Heart left ventricle (tissue), 16 donors: ENCODE measurements at regions of chr17 and their contacts with region 1.

Region 1: DNA sequence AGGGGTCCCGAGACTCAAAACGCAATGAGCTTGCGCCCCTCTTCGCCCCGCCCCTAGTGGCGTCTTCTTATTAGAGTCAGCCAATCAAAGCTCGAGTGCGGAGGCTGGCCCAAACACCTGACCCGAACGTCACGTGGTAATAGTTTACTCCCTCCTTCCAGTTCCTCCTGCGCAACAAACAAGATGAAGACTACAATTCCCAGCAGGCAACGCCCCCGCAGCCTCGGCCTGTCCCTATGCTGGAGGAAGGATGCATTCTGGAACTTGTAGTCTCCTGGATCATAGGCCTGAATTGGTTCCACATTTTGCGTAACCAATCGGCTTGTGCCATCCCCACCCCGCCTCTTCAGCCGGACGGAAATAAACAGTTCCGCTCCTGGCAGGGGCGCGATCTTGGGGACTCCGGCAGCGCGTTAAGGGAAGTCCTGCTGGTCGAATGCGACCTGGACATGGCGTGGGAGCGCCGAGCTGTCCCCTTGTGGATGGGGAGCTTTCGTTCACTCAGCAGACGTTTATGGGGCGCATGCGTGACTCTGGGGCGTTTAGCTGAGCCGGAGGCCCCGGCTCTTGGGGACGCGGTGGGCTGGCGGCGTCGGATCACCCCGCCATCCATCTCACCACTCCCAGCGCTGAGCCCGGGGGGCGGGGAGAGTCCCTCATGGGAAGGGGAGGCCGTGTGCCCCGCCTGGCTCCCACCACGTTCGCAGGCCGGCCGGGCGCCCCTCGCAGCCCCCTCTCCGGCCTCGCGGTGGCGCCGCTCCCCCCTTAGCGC is at the start of gene WBP2:
- DNase-seq: peak; percentile 97 to 99 (median 99)
- ATAC-seq: peak; percentile 90 to 96 (median 93)
- H3K4me3 ChIP-seq: peak within 1 kb of the TSS; percentile 57 to 97 (median 82)
- H3K27ac ChIP-seq: peak within 1 kb of the TSS; percentile 94 to 100 (median 98)
- H3K4me1 ChIP-seq: peaks cover 0 to 74% (median 45%) of the 10 kb centered on the region in 12 donors
- H3K27me3 ChIP-seq: no peaks in the 10 kb centered on the region
- CTCF ChIP-seq: peak in 11 of 12 donors; percentile 28 to 77 (median 54)
- POLR2A ChIP-seq: peak; percentile 83 to 98
- total RNA-seq, gene WBP2: 134 to 311 (median 158) TPM

Region 2: DNA sequence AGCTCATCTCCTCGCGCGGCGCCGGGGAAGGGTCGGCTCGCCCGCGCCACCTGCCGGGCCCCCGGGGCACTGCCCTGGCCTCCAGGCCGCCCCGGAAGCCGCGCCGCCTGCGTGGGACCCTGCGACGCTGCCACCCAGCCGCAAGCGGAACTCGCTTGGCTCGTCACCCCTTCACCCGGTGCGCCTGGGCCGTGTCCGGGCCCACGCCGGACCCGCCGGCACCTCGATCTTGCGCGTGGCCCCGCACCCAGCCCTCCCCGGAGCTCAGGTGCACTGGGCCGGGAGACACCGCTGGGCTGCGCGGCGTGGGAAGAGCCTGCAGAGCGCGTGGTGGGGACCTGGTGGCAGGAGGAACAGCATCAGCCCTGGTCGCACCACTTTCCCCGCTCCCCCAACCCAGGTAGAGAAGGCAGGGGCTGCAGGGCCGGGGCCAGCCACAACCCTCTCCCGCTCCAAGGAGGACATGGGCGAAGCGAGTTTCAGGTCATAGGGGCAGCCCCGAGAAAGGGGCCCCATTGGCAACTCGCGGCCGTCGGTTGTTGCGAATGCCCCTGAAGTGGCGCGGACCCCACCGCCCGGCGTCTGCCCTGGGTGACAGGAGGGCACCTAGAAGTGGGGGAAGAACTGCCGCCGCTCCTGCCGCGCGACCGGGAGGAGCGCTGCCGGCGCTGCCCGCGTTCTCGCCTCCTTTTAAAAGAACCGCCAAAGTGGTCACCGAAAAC is 584.1 kb before region 1 on chr17:
- intact Hi-C with region 1: no loop called
- DNase-seq: peak; percentile 82 to 92 (median 86)
- ATAC-seq: peak; percentile 32 to 83 (median 72)
- H3K4me3 ChIP-seq: peak overlapping the region; percentile 62 to 99 (median 95)
- H3K27ac ChIP-seq: peak overlapping the region; percentile 84 to 98 (median 92)
- H3K4me1 ChIP-seq: peaks cover 0 to 53% (median 22%) of the 10 kb centered on the region in 12 donors
- H3K27me3 ChIP-seq: no peaks in the 10 kb centered on the region
- CTCF ChIP-seq: peak; percentile 37 to 95 (median 83)
- POLR2A ChIP-seq: peak in 1 of 2 donors; percentile 38

Region 3: DNA sequence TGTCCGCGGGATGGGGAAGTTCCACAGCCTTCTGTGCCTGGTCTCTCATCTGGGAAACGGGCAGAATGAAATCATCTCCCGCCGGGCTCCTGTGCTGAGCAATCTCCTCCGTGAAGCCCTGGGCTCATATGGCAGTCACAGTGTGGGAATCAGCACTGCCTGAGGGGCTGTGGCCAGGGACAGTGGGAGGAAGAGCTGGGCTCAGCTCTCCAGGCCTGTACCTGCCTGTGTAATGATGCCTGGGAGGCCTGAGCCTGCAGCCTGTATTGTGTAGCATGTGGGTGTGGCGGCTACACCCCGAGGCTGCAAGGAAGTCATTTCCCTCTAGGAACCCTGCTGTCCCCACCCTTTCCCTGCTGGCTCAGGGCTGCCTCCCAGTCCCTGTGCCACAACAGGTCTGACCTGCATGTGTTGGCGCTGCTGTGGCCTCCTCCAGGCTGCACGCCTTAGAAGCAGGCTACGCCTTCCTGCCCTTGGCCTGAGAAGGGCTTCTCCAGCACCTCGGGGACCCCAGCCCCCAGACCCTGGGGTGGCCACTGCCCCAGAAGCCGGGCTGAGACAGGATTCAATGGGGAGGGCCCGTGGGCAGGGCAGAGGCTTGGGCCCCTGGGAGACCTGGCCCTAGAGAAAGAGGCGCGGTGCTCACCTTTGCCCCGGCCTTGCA is 132.2 kb before region 1 on chr17:
- intact Hi-C with region 1: no loop called
- DNase-seq: peak in 1 of 5 donors; percentile 73
- ATAC-seq: peak in 3 of 4 donors; percentile 53 to 74 (median 63)
- H3K4me3 ChIP-seq: peak overlapping the region in 4 of 12 donors; percentile 17 to 60 (median 25)
- H3K27ac ChIP-seq: peak overlapping the region in 10 of 12 donors; percentile 11 to 82 (median 44)
- H3K4me1 ChIP-seq: peaks cover 0 to 26% (median 12%) of the 10 kb centered on the region in 12 donors
- H3K27me3 ChIP-seq: peaks cover 0 to 32% (median 14%) of the 10 kb centered on the region in 9 donors
- CTCF ChIP-seq: no peak
- POLR2A ChIP-seq: peak in 1 of 2 donors; percentile 15

Region 4: DNA sequence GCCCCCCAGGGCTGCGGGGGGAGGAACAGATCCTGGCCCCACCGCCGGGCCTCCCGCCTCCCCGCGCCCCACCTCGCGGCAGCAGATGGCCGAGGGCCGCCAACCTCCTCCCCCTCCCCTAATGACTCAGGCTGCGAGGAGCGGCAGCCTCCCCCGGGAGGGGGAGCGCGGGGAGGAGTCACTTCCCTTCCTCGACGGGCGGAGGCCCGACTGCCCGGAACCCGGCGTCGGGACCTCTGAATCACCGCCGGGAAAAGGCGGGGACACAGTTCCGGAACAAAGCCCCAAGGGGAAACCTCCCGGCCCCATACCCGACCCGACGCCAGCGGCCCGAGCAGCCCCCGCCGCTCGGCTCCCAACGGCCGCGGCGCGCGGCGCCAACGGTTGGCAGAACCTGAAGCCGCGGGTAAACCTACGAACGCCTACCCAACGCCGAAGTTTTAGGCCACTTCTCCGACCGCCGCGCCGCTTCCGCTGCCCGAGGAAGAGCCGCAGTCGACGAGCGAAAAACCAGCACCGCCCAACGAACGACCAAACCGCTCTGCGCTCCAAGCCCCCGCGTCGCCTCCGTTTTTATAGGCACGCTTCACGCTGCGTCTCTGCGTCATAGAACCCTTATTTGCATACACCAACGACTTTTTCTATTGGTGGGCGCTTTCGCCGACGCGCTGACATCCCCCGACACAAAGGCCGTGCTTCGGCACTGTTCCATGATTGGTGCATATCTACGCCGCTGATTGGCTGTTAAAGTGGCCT is 76.1 kb before region 1 on chr17:
- intact Hi-C with region 1: loop called in 2 of 10 experiments (anchors 2 to 5 kb)
- DNase-seq: peak; percentile 97 to 99 (median 98)
- ATAC-seq: peak; percentile 79 to 85 (median 82)
- H3K4me3 ChIP-seq: peak overlapping the region; percentile 67 to 97 (median 88)
- H3K27ac ChIP-seq: peak overlapping the region; percentile 81 to 100 (median 98)
- H3K4me1 ChIP-seq: peaks cover 14 to 59% (median 43%) of the 10 kb centered on the region in 12 donors
- H3K27me3 ChIP-seq: no peaks in the 10 kb centered on the region
- CTCF ChIP-seq: peak in 3 of 12 donors; percentile 11 to 26 (median 16)
- POLR2A ChIP-seq: peak; percentile 100

Region 5: DNA sequence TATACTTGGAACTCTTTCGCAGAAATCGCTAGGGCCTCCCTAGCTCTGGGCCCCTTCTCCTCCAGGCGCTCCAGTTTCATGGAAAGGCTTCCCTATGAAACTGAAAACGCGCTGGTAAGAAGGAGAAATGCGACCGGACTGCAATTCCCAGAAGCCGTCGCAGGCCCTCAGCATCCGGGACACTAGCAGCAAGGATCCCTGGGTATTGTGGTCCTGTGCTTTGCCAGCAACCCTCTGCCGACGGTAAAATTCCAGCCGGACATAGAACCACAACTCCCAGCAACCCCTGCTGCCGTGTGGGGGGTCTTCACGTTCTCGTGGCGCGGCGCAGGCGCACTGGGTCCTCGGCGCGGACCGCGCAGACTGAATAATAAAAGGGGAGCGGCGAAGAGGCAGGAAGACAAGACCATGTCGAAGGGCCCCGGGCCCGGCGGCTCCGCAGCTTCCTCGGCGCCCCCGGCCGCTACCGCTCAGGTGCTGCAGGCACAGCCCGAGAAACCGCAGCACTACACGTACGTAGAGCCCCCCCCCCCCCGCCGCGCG is 71.0 kb before region 1 on chr17 and contains the start of gene UNK:
- intact Hi-C with region 1: loop called in 2 of 10 experiments (anchors 2 to 5 kb)
- DNase-seq: peak; percentile 97 to 99 (median 98)
- ATAC-seq: peak; percentile 91 to 94 (median 93)
- H3K4me3 ChIP-seq: peak within 1 kb of the TSS; percentile 45 to 89 (median 75)
- H3K27ac ChIP-seq: peak within 1 kb of the TSS; percentile 94 to 100 (median 99)
- H3K4me1 ChIP-seq: peaks cover 4 to 56% (median 36%) of the 10 kb centered on the region in 12 donors
- H3K27me3 ChIP-seq: no peaks in the 10 kb centered on the region
- CTCF ChIP-seq: no peak
- POLR2A ChIP-seq: peak in 1 of 2 donors; percentile 59
- total RNA-seq, gene UNK: 11.3 to 27.5 (median 16.3) TPM

Region 6: DNA sequence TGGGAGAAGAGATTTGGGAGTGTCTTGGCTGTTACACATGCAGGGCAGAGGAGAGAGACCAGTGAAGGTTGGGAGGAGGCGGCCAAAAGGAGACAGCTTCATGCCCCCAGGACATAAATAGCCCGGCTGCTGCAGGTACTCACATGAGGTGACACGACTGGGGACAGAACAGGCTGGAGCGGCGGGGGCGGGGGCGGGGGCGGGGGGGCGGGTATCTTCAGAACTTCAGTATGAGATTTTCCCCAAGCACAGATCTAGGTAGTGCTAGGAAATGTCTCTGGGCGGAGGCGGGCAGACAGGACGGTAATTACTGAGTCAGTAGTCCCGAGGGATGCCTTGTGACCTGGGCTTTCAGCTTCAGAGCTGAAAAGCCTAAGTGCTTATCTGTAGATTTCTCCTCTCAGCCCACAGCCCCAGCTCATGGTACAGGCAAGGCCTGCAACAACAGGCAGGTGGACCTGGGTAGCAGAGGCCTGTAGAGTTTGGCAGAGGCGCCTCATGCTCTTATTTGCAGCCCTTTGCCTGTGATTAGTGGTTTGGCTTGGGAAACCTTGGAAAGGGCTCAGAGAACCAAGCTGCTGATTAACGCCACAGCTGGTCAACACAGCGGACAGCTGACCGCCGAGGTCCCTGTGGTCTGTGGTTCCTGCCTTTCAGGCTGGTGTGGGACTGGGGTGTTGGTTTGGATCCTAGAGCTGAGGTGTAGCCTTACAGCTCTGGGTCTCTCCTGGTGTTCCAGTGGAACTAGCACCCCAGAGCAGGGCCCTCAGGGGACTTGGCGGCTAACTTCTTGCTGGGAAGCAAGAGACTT is 46.4 kb before region 1 on chr17:
- intact Hi-C with region 1: no loop called
- DNase-seq: peak in 4 of 5 donors; percentile 74 to 85 (median 79)
- ATAC-seq: peak; percentile 60 to 86 (median 77)
- H3K4me3 ChIP-seq: peak overlapping the region in 5 of 12 donors; percentile 3 to 24 (median 6)
- H3K27ac ChIP-seq: peak overlapping the region; percentile 62 to 93 (median 84)
- H3K4me1 ChIP-seq: peaks cover 8 to 45% (median 32%) of the 10 kb centered on the region in 12 donors
- H3K27me3 ChIP-seq: no peaks in the 10 kb centered on the region
- CTCF ChIP-seq: no peak
- POLR2A ChIP-seq: no peak

Region 7: GRCh38 chr17:75832164-75832651 is 23.3 kb before region 1 on chr17:
- intact Hi-C with region 1: no loop called
- DNase-seq: no peak
- ATAC-seq: peak in 3 of 4 donors; percentile 7 to 52 (median 17)
- H3K4me3 ChIP-seq: peak overlapping the region in 1 of 12 donors; percentile 7
- H3K27ac ChIP-seq: peak overlapping the region in 11 of 12 donors; percentile 0 to 90 (median 40)
- H3K4me1 ChIP-seq: peaks cover under 1 to 44% (median 25%) of the 10 kb centered on the region in 12 donors
- H3K27me3 ChIP-seq: no peaks in the 10 kb centered on the region
- CTCF ChIP-seq: no peak
- POLR2A ChIP-seq: peak in 1 of 2 donors; percentile 12

Region 8: DNA sequence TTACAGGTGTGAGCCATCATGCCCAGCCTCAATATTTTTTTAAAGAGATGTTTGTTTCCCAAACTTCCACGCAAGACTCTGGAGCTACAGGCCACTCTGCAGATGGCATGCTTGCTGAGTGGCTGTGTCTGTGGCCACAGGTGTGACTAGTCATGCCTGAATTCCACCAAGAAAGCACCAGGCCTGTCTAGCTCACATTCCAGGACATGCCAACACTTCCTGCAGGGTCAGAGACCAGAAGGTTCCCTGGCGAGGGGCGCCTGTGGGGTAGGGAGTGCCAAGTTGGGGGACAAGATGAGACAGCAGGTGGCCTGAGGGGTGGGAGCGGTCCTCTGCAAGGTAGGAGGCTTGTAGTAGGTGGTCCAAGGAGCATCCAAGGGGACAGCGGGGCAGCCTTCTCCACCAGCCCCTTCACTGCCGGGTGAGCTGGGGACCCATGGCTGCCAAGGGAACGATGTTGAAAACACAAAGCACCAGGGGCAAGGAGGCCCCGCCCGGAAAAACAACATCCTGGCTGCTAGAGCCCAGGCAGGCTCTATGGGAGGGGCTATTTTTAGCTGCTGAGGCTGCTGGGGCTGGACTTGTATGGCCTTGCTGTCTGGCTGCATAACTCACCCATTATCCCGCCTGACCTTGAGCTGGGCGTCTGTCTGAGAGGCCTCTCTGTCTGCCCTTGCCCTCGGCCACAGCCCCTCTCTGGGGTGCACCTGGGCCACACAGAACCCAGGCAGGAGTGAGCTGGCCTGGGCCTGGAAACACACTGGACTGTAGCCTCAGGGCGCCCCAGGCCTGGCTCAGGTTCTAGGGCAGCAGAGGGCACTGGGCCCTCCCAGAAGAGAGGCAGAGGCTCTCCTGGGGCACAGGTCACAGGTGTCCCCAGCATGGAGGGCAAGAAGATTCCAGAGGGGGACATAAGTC is 17.2 kb after region 1 on chr17:
- intact Hi-C with region 1: loop called in 2 of 10 experiments (anchors 1 to 2 kb)
- DNase-seq: peak; percentile 86 to 95 (median 90)
- ATAC-seq: peak; percentile 55 to 77 (median 66)
- H3K4me3 ChIP-seq: no peak overlapping the region
- H3K27ac ChIP-seq: peak overlapping the region; percentile 66 to 99 (median 92)
- H3K4me1 ChIP-seq: peaks cover 17 to 88% (median 59%) of the 10 kb centered on the region in 12 donors
- H3K27me3 ChIP-seq: no peaks in the 10 kb centered on the region
- CTCF ChIP-seq: no peak
- POLR2A ChIP-seq: peak in 1 of 2 donors; percentile 56

Region 9: DNA sequence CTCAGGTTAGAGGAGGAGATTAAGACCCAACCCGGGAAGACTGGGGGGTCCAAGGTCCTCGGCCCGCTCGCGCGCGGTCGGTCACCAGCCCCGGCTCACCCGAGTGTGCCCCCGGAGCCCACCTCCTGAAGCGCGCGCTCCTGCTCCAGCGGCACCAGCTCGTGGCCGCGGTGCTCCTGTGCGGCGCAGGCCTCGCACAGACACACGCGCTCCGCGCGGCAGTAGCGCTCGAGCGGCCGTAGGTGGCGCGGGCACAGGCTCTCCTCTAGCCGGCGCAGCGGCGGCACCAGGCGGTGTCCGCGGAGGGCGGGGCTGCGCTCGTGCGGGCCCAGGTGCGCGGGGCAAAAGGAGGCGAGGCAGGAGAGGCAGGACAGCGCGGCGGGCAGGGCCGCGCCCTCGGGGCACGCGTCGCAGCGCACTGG is 22.3 kb after region 1 on chr17:
- intact Hi-C with region 1: loop called in 4 of 10 experiments (anchors 1 to 2 kb)
- DNase-seq: peak; percentile 67 to 89 (median 76)
- ATAC-seq: peak in 3 of 4 donors; percentile 35 to 67 (median 61)
- H3K4me3 ChIP-seq: peak overlapping the region; percentile 64 to 96 (median 78)
- H3K27ac ChIP-seq: peak overlapping the region; percentile 91 to 99 (median 96)
- H3K4me1 ChIP-seq: peaks cover 14 to 64% (median 42%) of the 10 kb centered on the region in 12 donors
- H3K27me3 ChIP-seq: no peaks in the 10 kb centered on the region
- CTCF ChIP-seq: peak in 9 of 12 donors; percentile 8 to 67 (median 48)
- POLR2A ChIP-seq: no peak

Region 10: GRCh38 chr17:75896415-75897159 is 41.1 kb after region 1 on chr17 and contains the start of gene TRIM65:
- intact Hi-C with region 1: loop called in 6 of 10 experiments (anchors 1 to 5 kb)
- DNase-seq: peak; percentile 88 to 94 (median 90)
- ATAC-seq: peak; percentile 61 to 87 (median 85)
- H3K4me3 ChIP-seq: peak within 1 kb of the TSS; percentile 48 to 97 (median 80)
- H3K27ac ChIP-seq: peak within 1 kb of the TSS; percentile 88 to 99 (median 94)
- H3K4me1 ChIP-seq: peaks cover 0 to 32% (median 24%) of the 10 kb centered on the region in 12 donors
- H3K27me3 ChIP-seq: no peaks in the 10 kb centered on the region
- CTCF ChIP-seq: peak in 11 of 12 donors; percentile 28 to 73 (median 55)
- POLR2A ChIP-seq: peak in 1 of 2 donors; percentile 84
- total RNA-seq, gene TRIM65: 6.8 to 16.1 (median 9.5) TPM

Region 11: GRCh38 chr17:75904749-75905521 is 49.4 kb after region 1 on chr17 and contains the start of gene MRPL38:
- intact Hi-C with region 1: loop called in 1 of 10 experiments (anchors 2 kb)
- DNase-seq: peak; percentile 91 to 96 (median 94)
- ATAC-seq: peak; percentile 91 to 96 (median 94)
- H3K4me3 ChIP-seq: peak within 1 kb of the TSS; percentile 62 to 95 (median 90)
- H3K27ac ChIP-seq: peak within 1 kb of the TSS; percentile 82 to 96 (median 92)
- H3K4me1 ChIP-seq: peaks cover 0 to 32% (median 11%) of the 10 kb centered on the region in 12 donors
- H3K27me3 ChIP-seq: no peaks in the 10 kb centered on the region
- CTCF ChIP-seq: peak in 11 of 12 donors; percentile 96 to 100 (median 99)
- POLR2A ChIP-seq: peak in 1 of 2 donors; percentile 79
- total RNA-seq, gene MRPL38: 54.8 to 126 (median 106) TPM